Left cardiac atrium (tissue), 4 donors: ENCODE measurements at regions of chr18 and their contacts with region 1.

Region 1: DNA sequence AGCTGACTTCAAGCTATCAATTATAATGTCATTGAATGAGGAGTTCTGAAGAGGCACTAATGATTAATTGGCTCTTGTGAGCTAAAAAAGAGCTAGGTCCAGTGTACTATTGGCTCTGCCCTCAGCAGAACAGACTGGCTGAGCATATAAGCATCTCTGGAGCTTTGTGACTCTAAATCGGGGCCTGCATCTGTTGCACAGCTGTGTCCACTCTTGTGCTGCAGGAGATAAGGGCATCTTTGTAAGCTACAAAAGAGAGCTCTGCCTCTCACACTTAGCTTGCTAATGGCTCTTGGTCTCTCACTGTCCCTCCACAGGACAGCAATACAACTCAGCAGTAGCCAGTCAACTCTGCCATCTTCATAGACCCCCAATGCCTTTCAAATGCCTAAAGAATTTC is 61.5 kb upstream of the L3MBTL4 start:
- DNase-seq: no peak
- ATAC-seq: no peak

Region 2: GRCh38 chr18:6109743-6110142 is 366.4 kb before region 1 on chr18:
- intact Hi-C with region 1: loop called in 1 of 2 experiments (anchors 10 kb)
- DNase-seq: no peak
- ATAC-seq: peak; percentile 68 to 89

Region 3: GRCh38 chr18:7711495-7711894 is 1235.3 kb after region 1 on chr18:
- intact Hi-C with region 1: no loop called
- DNase-seq: no peak
- ATAC-seq: no peak